ENCODE measurements at regions of chr1 and their contacts with region 1.

Region 1: DNA sequence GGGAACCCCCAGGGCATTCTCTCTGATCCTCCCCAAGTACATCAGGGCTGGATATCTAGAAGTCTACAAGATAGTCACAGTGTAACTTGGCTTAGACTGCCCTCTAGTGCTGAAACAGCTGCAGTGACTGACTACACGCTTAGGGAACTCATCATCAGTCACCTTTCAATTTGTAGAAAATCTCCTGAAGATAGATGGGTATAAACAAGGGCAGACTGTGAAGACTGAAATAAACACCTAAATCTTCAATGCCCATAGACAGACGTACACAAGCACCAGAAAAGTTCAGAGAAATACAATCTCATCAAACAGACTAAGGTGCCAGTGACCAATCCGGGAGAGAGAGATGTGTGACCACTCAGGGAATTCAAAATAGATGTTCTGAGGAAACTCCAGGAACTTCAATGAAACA is 46.6 kb downstream of the PACC1 start:
- DNase-seq: peak; percentile 61
- ATAC-seq: peak; percentile 96
- H3K4me3 ChIP-seq: no peak overlapping the region
- H3K27ac ChIP-seq: no peak overlapping the region
- H3K4me1 ChIP-seq: no peaks in the 10 kb centered on the region
- H3K27me3 ChIP-seq: no peaks in the 10 kb centered on the region
- CTCF ChIP-seq: peak; percentile 85
- EP300 ChIP-seq: no peak
- POLR2A ChIP-seq: no peak
- RAD21 ChIP-seq: peak; percentile 72

Region 2: DNA sequence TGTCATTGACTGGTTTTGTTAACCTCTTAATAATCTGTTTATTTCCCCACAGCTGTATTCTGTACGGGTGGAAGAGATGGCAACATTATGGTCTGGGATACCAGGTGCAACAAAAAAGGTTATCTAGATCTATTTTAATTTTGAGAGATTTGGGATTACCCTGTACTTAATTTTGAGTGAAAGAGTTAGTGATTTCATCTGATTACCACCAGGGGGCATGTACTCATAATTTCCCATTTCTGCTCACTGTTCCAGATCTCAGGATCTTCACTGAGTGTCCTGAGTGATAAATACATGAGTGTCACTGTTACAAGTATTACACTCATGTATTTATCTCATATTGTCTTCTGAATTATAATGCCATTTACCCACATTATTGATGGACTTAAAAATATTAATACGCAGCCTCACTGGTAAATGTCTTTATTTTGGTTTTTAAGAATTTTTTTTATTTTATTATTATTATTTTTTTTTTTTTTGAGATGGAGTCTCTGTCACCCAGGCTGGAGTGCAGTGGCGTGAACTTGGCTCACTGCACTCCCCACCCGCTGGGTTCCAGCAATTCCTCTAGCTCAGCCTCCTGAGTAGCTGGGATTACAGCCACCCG is 305.1 kb before region 1 on chr1:
- CTCF ChIA-PET with region 1: interaction called, 22 read pairs
- POLR2A ChIA-PET with region 1: no interaction called
- in situ Hi-C with region 1: no loop called
- intact Hi-C with region 1: loop called (anchors 1 kb)
- DNase-seq: peak; percentile 47
- ATAC-seq: peak; percentile 74
- H3K4me3 ChIP-seq: no peak overlapping the region
- H3K27ac ChIP-seq: no peak overlapping the region
- H3K4me1 ChIP-seq: no peaks in the 10 kb centered on the region
- H3K27me3 ChIP-seq: no peaks in the 10 kb centered on the region
- CTCF ChIP-seq: peak; percentile 68
- EP300 ChIP-seq: no peak
- POLR2A ChIP-seq: no peak
- RAD21 ChIP-seq: peak; percentile 36; the same call in 1 of the 2 replicates

Region 3: GRCh38 chr1:212070720-212071302 is 297.3 kb before region 1 on chr1:
- CTCF ChIA-PET with region 1: interaction called, 25 read pairs
- POLR2A ChIA-PET with region 1: no interaction called
- in situ Hi-C with region 1: loop called (anchors 5 kb)
- intact Hi-C with region 1: loop called (anchors 1 kb)
- DNase-seq: peak; percentile 35
- ATAC-seq: peak; percentile 69
- H3K4me3 ChIP-seq: no peak overlapping the region
- H3K27ac ChIP-seq: no peak overlapping the region
- H3K4me1 ChIP-seq: no peaks in the 10 kb centered on the region
- H3K27me3 ChIP-seq: no peaks in the 10 kb centered on the region
- CTCF ChIP-seq: peak; percentile 71
- EP300 ChIP-seq: no peak
- POLR2A ChIP-seq: no peak
- RAD21 ChIP-seq: peak; percentile 76

Region 4: DNA sequence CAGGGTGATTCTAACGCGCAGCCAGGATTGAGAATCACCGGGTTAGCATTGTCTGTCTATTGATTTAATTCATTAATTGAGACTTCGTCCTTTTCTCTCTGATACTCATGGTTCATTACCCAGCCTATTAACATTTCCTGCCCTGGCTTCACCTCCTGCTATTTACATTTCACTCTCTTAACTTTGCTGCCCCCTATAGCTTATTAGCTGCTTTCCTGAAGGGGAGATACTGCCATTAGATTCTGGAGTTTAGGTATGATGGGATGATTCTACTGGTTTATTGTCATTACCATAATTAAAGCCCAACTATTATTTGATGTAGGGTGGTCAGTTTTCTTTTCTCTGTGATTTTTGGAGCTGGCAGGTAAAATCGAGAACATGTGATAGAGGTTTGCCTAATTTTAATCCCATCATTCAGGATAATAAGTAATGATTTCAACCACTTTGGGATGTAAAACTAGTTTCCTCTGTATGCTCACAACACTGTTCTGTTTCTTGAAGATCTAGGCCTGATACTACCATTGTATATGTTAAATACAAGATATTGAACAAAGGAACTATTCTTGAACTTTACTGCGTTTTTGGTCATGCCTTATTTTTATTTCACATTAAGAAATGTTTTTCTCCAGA is 76.5 kb before region 1 on chr1:
- CTCF ChIA-PET with region 1: interaction called, 3 read pairs
- POLR2A ChIA-PET with region 1: no interaction called
- in situ Hi-C with region 1: no loop called
- intact Hi-C with region 1: loop called (anchors 5 kb)
- DNase-seq: peak; percentile 50
- ATAC-seq: peak; percentile 88
- H3K4me3 ChIP-seq: no peak overlapping the region
- H3K27ac ChIP-seq: no peak overlapping the region
- H3K4me1 ChIP-seq: peaks cover 62% of the 10 kb centered on the region
- H3K27me3 ChIP-seq: no peaks in the 10 kb centered on the region; a peak in 1 of 5 replicates
- CTCF ChIP-seq: peak; percentile 81
- EP300 ChIP-seq: no peak
- POLR2A ChIP-seq: no peak
- RAD21 ChIP-seq: peak; percentile 66; the same call in 1 of the 2 replicates

Region 5: GRCh38 chr1:212353181-212353580 is 14.9 kb before region 1 on chr1:
- CTCF ChIA-PET with region 1: no interaction called
- POLR2A ChIA-PET with region 1: no interaction called
- in situ Hi-C with region 1: no loop called
- intact Hi-C with region 1: no loop called
- DNase-seq: no peak
- ATAC-seq: no peak
- H3K4me3 ChIP-seq: no peak overlapping the region
- H3K27ac ChIP-seq: no peak overlapping the region
- H3K4me1 ChIP-seq: no peaks in the 10 kb centered on the region
- H3K27me3 ChIP-seq: no peaks in the 10 kb centered on the region
- CTCF ChIP-seq: no peak
- EP300 ChIP-seq: no peak
- POLR2A ChIP-seq: no peak
- RAD21 ChIP-seq: no peak

Region 6: GRCh38 chr1:212455803-212456528 is 87.9 kb after region 1 on chr1:
- CTCF ChIA-PET with region 1: no interaction called
- POLR2A ChIA-PET with region 1: no interaction called
- in situ Hi-C with region 1: loop called (anchors 10 kb)
- intact Hi-C with region 1: loop called (anchors 5 kb)
- DNase-seq: peak; percentile 58
- ATAC-seq: peak; percentile 87
- H3K4me3 ChIP-seq: no peak overlapping the region
- H3K27ac ChIP-seq: no peak overlapping the region
- H3K4me1 ChIP-seq: peaks cover 12% of the 10 kb centered on the region; the same call in 1 of the 2 replicates
- H3K27me3 ChIP-seq: no peaks in the 10 kb centered on the region
- CTCF ChIP-seq: peak; percentile 91
- EP300 ChIP-seq: no peak
- POLR2A ChIP-seq: no peak
- RAD21 ChIP-seq: peak; percentile 86

Region 7: GRCh38 chr1:212920896-212921295 is 552.8 kb after region 1 on chr1:
- CTCF ChIA-PET with region 1: no interaction called
- POLR2A ChIA-PET with region 1: no interaction called
- in situ Hi-C with region 1: no loop called
- intact Hi-C with region 1: no loop called
- DNase-seq: no peak
- ATAC-seq: no peak
- H3K4me3 ChIP-seq: no peak overlapping the region
- H3K27ac ChIP-seq: no peak overlapping the region
- H3K4me1 ChIP-seq: peaks cover 30% of the 10 kb centered on the region
- H3K27me3 ChIP-seq: peaks cover 0 to 16% of the 10 kb centered on the region in 2 experiments; a peak in 1 of 5 replicates
- CTCF ChIP-seq: peak; percentile 50
- EP300 ChIP-seq: no peak
- POLR2A ChIP-seq: no peak
- RAD21 ChIP-seq: peak; percentile 40; the same call in 1 of the 2 replicates